ENCODE measurements at regions of chr13 and their contacts with region 1.

Region 1: GRCh38 chr13:20288561-20288960 is 56.4 kb upstream of the GJB6 start:
- DNase-seq: no peak
- ATAC-seq: no peak
- H3K4me3 ChIP-seq: no peak overlapping the region
- H3K4me3 Mint-ChIP-seq: no peak overlapping the region
- H3K27ac ChIP-seq: no peak overlapping the region
- H3K27ac Mint-ChIP-seq: no peak overlapping the region
- H3K4me1 ChIP-seq: no peaks in the 10 kb centered on the region
- H3K4me1 Mint-ChIP-seq: peaks cover 4% of the 10 kb centered on the region
- H3K27me3 ChIP-seq: no peaks in the 10 kb centered on the region
- H3K27me3 Mint-ChIP-seq: no peaks in the 10 kb centered on the region
- CTCF ChIP-seq: no peak

Region 2: DNA sequence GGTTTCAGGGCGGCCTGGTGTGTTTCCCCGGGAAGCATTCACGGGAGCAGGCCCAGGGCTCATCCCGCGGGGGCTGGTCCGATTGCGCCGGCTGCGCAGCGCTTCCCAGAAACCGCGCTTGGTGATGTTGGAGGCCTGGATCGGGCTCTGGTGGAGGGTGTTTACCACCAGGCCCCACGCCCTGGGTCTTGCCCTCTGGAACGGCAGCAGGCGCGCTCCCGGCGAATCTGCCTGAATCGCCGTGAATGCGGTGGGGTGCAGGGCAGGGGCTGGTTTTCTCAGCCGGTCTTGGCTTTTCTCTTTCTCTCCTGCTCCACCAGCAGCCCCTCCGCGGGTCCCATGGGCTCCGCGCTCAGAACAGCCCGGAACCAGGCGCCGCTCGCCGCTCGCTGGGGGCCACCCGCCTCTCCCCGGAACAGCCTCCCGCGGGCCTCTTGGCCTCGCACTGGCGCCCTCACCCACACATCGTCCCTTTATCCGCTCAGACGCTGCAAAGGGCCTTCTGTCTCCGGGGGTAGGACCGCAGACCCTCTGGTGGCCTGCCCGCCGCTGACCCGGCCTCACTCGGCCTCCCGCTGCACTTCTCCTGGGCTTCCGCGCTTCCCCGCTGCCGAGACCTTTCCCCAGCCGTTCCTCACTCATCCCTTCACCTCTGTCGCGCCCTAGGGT is 13.0 kb after region 1 on chr13:
- CTCF ChIA-PET with region 1: no interaction called
- POLR2A ChIA-PET with region 1: no interaction called
- intact Hi-C with region 1: loop called in 1 of 2 experiments (anchors 2 kb)
- DNase-seq: no peak
- ATAC-seq: no peak
- H3K4me3 ChIP-seq: peak overlapping the region; percentile 14
- H3K4me3 Mint-ChIP-seq: no peak overlapping the region
- H3K27ac ChIP-seq: no peak overlapping the region
- H3K27ac Mint-ChIP-seq: no peak overlapping the region
- H3K4me1 ChIP-seq: peaks cover 5% of the 10 kb centered on the region
- H3K4me1 Mint-ChIP-seq: no peaks in the 10 kb centered on the region
- H3K27me3 ChIP-seq: peaks cover 19 to 21% of the 10 kb centered on the region in 2 experiments
- H3K27me3 Mint-ChIP-seq: peaks cover 55% of the 10 kb centered on the region
- CTCF ChIP-seq: no peak

Region 3: GRCh38 chr13:20326276-20326675 is 37.7 kb after region 1 on chr13:
- CTCF ChIA-PET with region 1: no interaction called
- POLR2A ChIA-PET with region 1: no interaction called
- intact Hi-C with region 1: no loop called
- DNase-seq: no peak
- ATAC-seq: no peak
- H3K4me3 ChIP-seq: no peak overlapping the region
- H3K4me3 Mint-ChIP-seq: no peak overlapping the region
- H3K27ac ChIP-seq: no peak overlapping the region
- H3K27ac Mint-ChIP-seq: no peak overlapping the region
- H3K4me1 ChIP-seq: no peaks in the 10 kb centered on the region
- H3K4me1 Mint-ChIP-seq: no peaks in the 10 kb centered on the region
- H3K27me3 ChIP-seq: peaks cover 0 to 4% of the 10 kb centered on the region in 2 experiments
- H3K27me3 Mint-ChIP-seq: peaks cover 4% of the 10 kb centered on the region
- CTCF ChIP-seq: no peak